ENCODE measurements at regions of chr11 and their contacts with region 1.

Region 1: GRCh38 chr11:45917623-45918330 is at the start of gene PEX16:
- DNase-seq: peak; percentile 97
- H3K4me3 Mint-ChIP-seq: peak within 1 kb of the TSS; percentile 97
- H3K27ac Mint-ChIP-seq: peak within 1 kb of the TSS; percentile 97
- H3K4me1 Mint-ChIP-seq: peaks cover 41% of the 10 kb centered on the region
- H3K27me3 Mint-ChIP-seq: peaks cover 6% of the 10 kb centered on the region
- total RNA-seq, gene PEX16: 54.1 to 55.0 TPM

Region 2: GRCh38 chr11:45761659-45762058 is 156.1 kb before region 1 on chr11:
- CTCF ChIA-PET with region 1: no interaction called
- POLR2A ChIA-PET with region 1: no interaction called
- DNase-seq: no peak
- H3K4me3 Mint-ChIP-seq: no peak overlapping the region
- H3K27ac Mint-ChIP-seq: no peak overlapping the region
- H3K4me1 Mint-ChIP-seq: no peaks in the 10 kb centered on the region
- H3K27me3 Mint-ChIP-seq: peaks cover 18% of the 10 kb centered on the region

Region 3: DNA sequence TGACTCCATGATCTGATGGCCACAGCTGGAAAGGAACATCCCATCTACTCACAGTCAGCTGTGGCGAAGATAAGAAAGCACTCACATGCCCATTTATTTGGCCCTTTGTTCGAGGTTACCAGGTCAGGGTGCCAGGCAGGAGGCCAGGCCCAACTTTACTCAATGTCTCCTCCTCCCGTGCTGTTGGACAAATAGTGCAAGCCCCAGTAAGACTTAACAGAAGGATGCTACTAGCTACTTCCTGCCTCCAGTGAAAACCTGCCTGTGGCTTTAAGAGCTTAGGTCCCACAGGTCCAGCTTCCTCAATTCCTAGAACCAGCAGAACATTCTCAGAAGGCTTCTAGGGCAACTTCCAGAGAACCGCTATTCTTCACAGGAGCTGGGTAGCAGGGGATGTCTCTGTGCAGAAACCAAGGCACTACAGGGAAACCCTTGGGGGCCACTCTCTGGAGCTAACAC is 83.5 kb before region 1 on chr11:
- CTCF ChIA-PET with region 1: no interaction called
- POLR2A ChIA-PET with region 1: interaction called, 11 read pairs
- DNase-seq: peak; percentile 68
- H3K4me3 Mint-ChIP-seq: peak overlapping the region; percentile 77
- H3K27ac Mint-ChIP-seq: peak overlapping the region; percentile 91
- H3K4me1 Mint-ChIP-seq: peaks cover 39% of the 10 kb centered on the region
- H3K27me3 Mint-ChIP-seq: peaks cover 12% of the 10 kb centered on the region

Region 4: DNA sequence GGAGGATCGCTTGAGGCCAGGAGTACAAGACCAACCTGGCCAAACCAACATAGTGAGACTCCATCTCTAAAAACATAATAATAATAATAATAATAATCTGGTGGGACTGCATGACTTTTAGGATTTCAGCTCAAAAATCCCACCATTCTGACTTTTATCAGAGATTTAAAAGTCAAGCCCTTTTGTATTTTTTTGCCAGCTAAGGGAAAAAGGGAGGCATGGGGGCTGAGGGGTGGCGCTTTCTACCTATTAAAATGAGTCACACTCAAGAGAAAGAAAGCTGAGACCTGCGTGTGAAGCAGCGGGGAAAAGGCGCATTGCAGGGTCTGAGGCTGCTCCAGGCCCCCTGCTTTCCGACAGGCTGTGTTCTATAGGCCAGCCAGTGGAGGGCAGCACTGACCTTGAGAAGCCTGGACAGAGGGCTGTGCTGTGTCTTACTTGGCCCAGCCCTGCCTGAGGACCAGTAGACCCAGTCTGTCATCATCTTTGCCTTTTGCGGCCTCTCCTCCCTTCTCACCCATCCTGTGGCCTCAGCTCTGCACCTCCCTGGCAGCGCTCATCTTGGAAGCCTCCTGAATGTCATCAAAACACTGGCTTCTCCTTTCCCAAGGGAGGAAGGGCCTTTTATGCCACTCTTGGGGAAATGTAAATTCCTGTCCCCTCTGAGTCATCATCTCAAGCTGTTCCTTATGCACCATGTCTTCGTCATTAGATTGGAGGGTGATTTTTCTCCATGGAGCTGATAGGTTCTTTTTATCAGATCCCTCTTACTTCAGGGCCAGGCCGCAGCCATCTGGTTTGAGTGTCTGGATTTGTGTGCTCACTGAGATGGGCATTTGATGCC is 45.0 kb before region 1 on chr11:
- CTCF ChIA-PET with region 1: interaction called, 12 read pairs
- POLR2A ChIA-PET with region 1: no interaction called
- DNase-seq: peak; percentile 43
- H3K4me3 Mint-ChIP-seq: no peak overlapping the region
- H3K27ac Mint-ChIP-seq: no peak overlapping the region
- H3K4me1 Mint-ChIP-seq: no peaks in the 10 kb centered on the region
- H3K27me3 Mint-ChIP-seq: no peaks in the 10 kb centered on the region

Region 5: DNA sequence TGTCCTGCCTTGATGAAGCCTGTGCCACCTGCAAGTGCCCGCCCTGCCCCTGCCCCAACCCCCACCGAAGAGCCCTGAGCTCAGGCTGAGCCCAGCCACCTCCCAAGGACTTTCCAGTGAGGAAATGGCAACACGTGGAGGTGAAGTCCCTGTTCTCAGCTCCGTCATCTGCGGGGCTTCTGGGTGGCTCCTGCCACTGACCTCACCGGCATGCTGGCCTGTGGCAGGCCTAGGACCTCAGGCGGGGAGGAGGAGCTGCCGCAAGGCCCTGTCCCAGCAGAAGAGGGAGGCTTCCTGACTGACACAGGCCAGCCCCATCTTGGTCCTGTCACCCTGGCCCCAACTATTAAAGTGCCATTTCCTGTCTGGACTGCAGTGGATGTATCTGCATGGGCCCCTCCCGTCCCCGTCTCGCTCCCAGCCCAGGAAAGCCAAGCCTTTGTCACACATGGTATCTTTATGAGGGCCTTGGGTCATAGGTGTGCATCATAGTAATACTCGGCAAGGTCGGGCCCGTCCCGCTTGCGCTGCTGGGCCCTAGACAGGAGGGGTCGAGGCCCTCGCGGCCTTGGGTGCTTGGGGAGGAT is 11.6 kb before region 1 on chr11:
- CTCF ChIA-PET with region 1: no interaction called
- POLR2A ChIA-PET with region 1: interaction called, 13 read pairs
- DNase-seq: no peak
- H3K4me3 Mint-ChIP-seq: no peak overlapping the region
- H3K27ac Mint-ChIP-seq: no peak overlapping the region
- H3K4me1 Mint-ChIP-seq: peaks cover 6% of the 10 kb centered on the region
- H3K27me3 Mint-ChIP-seq: peaks cover 7% of the 10 kb centered on the region

Region 6: GRCh38 chr11:45964911-45965389 is 47.2 kb after region 1 on chr11:
- CTCF ChIA-PET with region 1: interaction called, 10 read pairs
- POLR2A ChIA-PET with region 1: no interaction called
- DNase-seq: peak; percentile 62
- H3K4me3 Mint-ChIP-seq: no peak overlapping the region
- H3K27ac Mint-ChIP-seq: no peak overlapping the region
- H3K4me1 Mint-ChIP-seq: no peaks in the 10 kb centered on the region
- H3K27me3 Mint-ChIP-seq: no peaks in the 10 kb centered on the region

Measured in activated CD4-positive, alpha-beta memory T cell treated with anti-CD3 and anti-CD28 coated beads, Interleukin-2, amount 10 ng/mL, durations not matched to agents 7 days and 5 days (primary cell).